ENCODE measurements at regions of chr5 and their contacts with region 1.

Region 1: GRCh38 chr5:168579488-168580226 is 489 bp upstream of the PANK3 start:
- DNase-seq: peak; percentile 98 to 99
- ATAC-seq: peak; percentile 98 to 99 (median 98)
- H3K4me3 ChIP-seq: peak overlapping the region; percentile 81
- H3K27ac ChIP-seq: peak overlapping the region; percentile 92
- H3K4me1 ChIP-seq: peaks cover 25% of the 10 kb centered on the region
- H3K27me3 ChIP-seq: no peaks in the 10 kb centered on the region
- CTCF ChIP-seq: no peak

Region 2: DNA sequence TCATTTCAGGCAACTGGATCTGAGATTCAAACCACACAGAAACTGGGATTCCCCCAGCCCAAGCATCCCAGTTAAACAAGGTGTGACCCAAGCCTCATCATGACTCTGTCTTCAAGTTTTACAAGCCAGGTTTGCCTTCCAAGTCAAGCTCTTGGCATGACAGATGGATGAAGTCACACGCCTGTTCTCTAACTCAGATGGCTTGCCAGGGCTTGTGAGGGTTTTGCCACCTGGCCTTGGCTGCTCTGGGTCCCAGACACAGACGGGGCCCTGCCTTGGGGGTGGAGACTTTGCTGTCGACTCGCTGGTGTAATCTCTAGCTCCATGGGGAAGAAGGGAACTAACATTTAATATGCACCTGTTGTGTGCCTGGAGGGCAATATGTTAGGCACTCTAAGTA is 189.2 kb before region 1 on chr5:
- intact Hi-C with region 1: loop called in 1 of 2 experiments (anchors 5 kb)
- DNase-seq: no peak
- ATAC-seq: no peak
- H3K4me3 ChIP-seq: no peak overlapping the region
- H3K27ac ChIP-seq: no peak overlapping the region
- H3K4me1 ChIP-seq: no peaks in the 10 kb centered on the region
- H3K27me3 ChIP-seq: no peaks in the 10 kb centered on the region
- CTCF ChIP-seq: no peak

Region 3: DNA sequence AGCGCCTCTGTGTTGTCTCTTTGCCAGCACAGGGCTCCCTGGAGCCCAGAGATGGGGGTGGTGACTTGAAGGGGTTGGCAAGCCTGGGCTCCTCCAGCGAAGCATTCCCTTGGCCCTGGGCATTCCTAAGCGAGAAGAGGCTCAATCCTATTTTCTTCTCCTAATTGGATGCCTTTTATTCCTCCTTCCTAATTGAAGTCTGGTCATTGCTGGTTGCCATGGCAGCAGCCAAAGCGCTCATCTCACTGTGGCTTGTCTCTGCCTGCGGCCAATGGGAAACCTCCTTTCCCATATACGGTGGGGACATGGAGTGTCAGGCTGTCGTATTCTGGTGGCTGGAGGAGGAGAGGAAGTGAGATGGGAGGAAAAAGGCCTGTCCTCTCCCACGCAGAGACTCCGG is 145.7 kb before region 1 on chr5:
- intact Hi-C with region 1: no loop called
- DNase-seq: no peak
- ATAC-seq: no peak
- H3K4me3 ChIP-seq: no peak overlapping the region
- H3K27ac ChIP-seq: no peak overlapping the region
- H3K4me1 ChIP-seq: no peaks in the 10 kb centered on the region
- H3K27me3 ChIP-seq: no peaks in the 10 kb centered on the region
- CTCF ChIP-seq: no peak

Region 4: GRCh38 chr5:168468836-168469235 is 110.8 kb before region 1 on chr5:
- intact Hi-C with region 1: no loop called
- DNase-seq: no peak
- ATAC-seq: no peak
- H3K4me3 ChIP-seq: no peak overlapping the region
- H3K27ac ChIP-seq: no peak overlapping the region
- H3K4me1 ChIP-seq: no peaks in the 10 kb centered on the region
- H3K27me3 ChIP-seq: peaks cover 0 to 14% (median 0%) of the 10 kb centered on the region in 3 donors
- CTCF ChIP-seq: no peak

Region 5: DNA sequence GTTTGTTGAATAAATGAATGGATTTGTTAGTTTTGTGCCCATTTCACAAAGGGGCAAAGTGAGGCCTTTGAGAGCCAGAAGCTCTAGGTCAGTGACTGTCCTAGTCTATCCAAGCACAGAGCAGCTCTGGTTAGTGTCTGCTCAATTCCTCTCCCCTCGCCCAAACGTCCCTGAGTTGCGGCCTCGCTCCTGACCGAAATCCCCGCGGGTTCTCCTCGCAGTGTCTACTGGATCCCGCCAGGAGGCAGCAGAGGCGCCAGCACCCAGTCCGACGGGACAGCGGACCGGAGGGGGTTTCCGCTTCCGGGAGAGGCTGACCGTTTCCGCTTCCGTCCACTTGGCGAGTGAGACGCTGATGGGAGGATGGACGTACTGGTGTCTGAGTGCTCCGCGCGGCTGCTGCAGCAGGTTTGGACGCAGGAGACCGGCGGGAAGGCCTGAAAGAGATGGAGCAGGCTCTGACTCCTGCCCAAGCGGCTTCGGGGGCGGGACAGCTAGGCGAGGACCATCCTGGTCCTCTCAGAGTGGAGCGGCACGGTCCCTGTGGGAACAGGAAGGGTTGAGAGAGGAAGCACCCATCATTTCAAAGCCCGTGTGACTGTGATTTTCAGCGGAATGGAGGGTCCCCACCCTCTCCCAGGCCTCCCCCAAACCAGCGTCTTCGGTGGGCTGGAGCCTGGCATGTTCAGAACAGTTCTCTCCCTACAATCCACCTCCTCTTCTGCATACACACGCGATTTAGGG is 93.3 kb before region 1 on chr5 and contains the start of gene RARS1:
- intact Hi-C with region 1: loop called (anchors 2 to 5 kb)
- DNase-seq: peak; percentile 94 to 97
- ATAC-seq: peak; percentile 97 to 100 (median 100)
- H3K4me3 ChIP-seq: peak within 1 kb of the TSS; percentile 92
- H3K27ac ChIP-seq: peak within 1 kb of the TSS; percentile 32
- H3K4me1 ChIP-seq: peaks cover 5% of the 10 kb centered on the region
- H3K27me3 ChIP-seq: no peaks in the 10 kb centered on the region
- CTCF ChIP-seq: peak; percentile 95
- total RNA-seq, gene RARS1: 31.6 to 40.4 (median 37.8) TPM